CD8-positive, alpha-beta memory T cell (primary cell): ENCODE measurements at regions of chr14 and their contacts with region 1.

Region 1: DNA sequence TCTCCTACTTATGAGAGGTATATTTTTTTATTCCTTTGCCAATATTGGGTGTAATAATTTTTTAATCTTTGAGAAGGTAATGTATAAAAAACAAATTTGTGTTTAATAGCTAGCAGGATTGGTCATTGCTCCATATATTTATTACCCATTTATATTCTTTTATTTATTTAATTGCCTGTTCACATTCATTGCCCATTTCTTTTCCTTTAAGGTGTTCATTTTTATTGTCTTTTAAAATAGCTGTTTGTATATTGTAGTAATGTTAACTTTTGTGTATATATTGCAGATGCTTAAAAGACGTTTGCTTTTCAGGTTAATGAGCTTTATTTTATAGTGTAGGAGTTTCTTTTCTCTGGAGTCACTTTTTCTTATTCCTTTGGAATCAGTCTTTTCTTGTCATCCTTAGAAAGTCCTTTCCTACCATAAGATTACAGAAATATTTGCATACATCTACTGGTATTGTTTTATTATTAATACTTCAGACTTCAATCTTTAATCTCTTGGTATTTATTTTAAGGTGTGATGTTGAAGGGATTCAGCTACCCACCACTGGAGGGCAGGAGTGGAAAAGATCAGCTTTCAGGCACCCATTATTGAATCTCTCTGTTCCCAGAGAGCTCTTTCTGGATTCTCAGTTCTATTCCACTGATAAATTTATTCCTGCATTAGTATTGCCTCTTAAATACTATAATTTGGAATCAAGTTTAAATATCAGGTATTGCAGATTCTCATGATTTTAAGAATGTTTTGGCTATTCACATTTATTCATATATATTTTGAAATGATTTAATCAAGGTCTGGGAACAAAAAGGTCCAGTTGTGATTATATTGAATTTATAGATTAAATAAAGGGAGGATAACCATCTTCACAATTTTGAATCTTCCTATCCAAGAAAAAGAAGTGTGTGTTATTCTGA is 17.3 kb downstream of the PPM1A start:
- DNase-seq: peak in 1 of 5 donors; percentile 13
- H3K4me3 ChIP-seq: no peak overlapping the region
- H3K4me3 Mint-ChIP-seq: no peak overlapping the region
- H3K27ac ChIP-seq: no peak overlapping the region
- H3K27ac Mint-ChIP-seq: peak overlapping the region in 2 of 8 donors; percentile 57 to 71
- H3K4me1 ChIP-seq: peaks cover 6% of the 10 kb centered on the region
- H3K4me1 Mint-ChIP-seq: peaks cover 27 to 67% (median 57%) of the 10 kb centered on the region in 3 donors
- H3K27me3 ChIP-seq: no peaks in the 10 kb centered on the region
- H3K27me3 Mint-ChIP-seq: no peaks in the 10 kb centered on the region

Region 2: DNA sequence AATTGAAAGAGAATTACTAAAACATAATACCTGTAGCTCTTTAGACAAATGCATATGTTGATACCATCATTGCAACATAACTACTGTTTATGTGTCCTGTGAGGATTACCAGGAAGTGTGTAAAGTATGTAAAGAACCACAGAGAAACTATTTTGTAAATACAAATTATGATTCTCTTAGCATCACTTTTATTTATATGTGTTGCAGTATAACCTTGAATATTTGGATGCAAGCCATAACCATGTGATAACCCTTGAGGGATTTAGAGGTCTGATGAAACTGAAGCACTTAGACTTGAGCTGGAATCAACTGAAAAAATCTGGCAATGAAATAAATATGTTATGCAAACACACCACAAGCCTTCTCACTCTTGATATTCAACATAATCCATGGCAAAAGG is 268.8 kb before region 1 on chr14:
- CTCF ChIA-PET with region 1: no interaction called
- POLR2A ChIA-PET with region 1: no interaction called
- DNase-seq: no peak
- H3K4me3 ChIP-seq: no peak overlapping the region
- H3K4me3 Mint-ChIP-seq: no peak overlapping the region
- H3K27ac ChIP-seq: no peak overlapping the region
- H3K27ac Mint-ChIP-seq: no peak overlapping the region
- H3K4me1 ChIP-seq: no peaks in the 10 kb centered on the region
- H3K4me1 Mint-ChIP-seq: no peaks in the 10 kb centered on the region
- H3K27me3 ChIP-seq: no peaks in the 10 kb centered on the region
- H3K27me3 Mint-ChIP-seq: peaks cover 2 to 7% of the 10 kb centered on the region in 2 donors

Region 3: DNA sequence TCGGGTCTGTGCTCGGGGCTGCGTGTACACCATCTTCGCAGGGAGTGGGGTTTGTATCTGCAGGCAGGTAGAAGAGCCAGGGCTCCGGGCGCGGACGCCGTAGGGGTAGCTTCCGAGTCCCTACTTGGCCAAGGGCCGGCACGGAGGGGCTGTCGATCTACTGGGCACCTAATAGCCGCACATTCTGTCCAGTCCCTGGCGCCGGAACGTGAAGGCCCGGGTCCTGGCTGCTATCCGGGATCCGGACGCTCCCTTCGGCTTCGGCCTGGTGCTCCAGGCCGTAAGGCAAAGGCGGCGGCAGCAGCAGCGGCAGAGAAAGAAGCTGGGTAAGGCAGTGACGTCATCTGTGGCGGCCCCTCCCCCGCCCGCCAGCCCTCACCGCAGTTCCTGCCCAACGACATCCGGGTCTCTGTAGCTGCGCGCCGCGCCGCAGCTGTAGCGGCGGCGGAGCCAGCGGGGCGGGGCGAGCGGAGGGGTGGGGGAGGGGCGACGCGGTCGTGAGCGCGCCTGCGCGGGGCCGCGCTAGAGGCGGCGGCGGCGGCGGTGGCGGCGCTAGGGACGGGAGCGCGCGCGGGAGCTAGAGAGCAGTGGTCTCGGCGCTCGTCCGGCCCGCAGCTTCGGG is 17.5 kb before region 1 on chr14 and contains the start of gene PPM1A:
- CTCF ChIA-PET with region 1: interaction called, 11 read pairs
- POLR2A ChIA-PET with region 1: interaction called, 18 read pairs
- DNase-seq: peak; percentile 93 to 97 (median 94)
- H3K4me3 ChIP-seq: peak within 1 kb of the TSS; percentile 78
- H3K4me3 Mint-ChIP-seq: peak within 1 kb of the TSS; percentile 90 to 99 (median 95)
- H3K27ac ChIP-seq: peak within 1 kb of the TSS; percentile 94
- H3K27ac Mint-ChIP-seq: peak within 1 kb of the TSS; percentile 97 to 100 (median 100)
- H3K4me1 ChIP-seq: peaks cover 24% of the 10 kb centered on the region
- H3K4me1 Mint-ChIP-seq: peaks cover 50 to 52% (median 52%) of the 10 kb centered on the region in 3 donors
- H3K27me3 ChIP-seq: no peaks in the 10 kb centered on the region
- H3K27me3 Mint-ChIP-seq: peaks cover 0 to 4% of the 10 kb centered on the region in 2 donors
- total RNA-seq, gene PPM1A: 54.6 to 55.3 TPM

Region 4: DNA sequence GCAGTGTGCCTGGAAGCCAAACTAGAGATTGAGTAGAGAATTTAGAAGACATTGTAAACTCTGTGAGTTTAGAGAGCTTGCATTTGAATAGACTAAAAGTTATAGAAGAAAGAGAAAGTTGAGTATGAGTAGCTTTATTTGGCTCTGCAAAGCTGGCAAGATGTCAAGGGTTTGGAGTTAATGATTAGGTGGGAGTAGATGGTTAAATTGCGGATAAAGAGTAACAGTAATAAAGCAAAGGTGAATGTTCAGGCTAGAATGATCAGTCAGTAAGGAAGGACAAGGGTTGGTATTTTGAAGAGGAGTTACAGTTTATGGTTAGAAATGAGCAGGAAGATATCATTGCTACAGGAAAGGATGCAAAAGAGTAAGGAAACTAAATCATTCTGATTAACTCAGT is 12.1 kb before region 1 on chr14:
- CTCF ChIA-PET with region 1: interaction called, 11 read pairs
- POLR2A ChIA-PET with region 1: interaction called, 18 read pairs
- DNase-seq: no peak
- H3K4me3 ChIP-seq: no peak overlapping the region
- H3K4me3 Mint-ChIP-seq: no peak overlapping the region
- H3K27ac ChIP-seq: no peak overlapping the region
- H3K27ac Mint-ChIP-seq: peak overlapping the region in 1 of 8 donors; percentile 2
- H3K4me1 ChIP-seq: peaks cover 28% of the 10 kb centered on the region
- H3K4me1 Mint-ChIP-seq: peaks cover 68 to 85% (median 83%) of the 10 kb centered on the region in 3 donors
- H3K27me3 ChIP-seq: no peaks in the 10 kb centered on the region
- H3K27me3 Mint-ChIP-seq: peaks cover 0 to 1% of the 10 kb centered on the region in 2 donors